Motor neuron (in vitro differentiated cells): ENCODE measurements at regions of chr10 and their contacts with region 1.

Region 1: DNA sequence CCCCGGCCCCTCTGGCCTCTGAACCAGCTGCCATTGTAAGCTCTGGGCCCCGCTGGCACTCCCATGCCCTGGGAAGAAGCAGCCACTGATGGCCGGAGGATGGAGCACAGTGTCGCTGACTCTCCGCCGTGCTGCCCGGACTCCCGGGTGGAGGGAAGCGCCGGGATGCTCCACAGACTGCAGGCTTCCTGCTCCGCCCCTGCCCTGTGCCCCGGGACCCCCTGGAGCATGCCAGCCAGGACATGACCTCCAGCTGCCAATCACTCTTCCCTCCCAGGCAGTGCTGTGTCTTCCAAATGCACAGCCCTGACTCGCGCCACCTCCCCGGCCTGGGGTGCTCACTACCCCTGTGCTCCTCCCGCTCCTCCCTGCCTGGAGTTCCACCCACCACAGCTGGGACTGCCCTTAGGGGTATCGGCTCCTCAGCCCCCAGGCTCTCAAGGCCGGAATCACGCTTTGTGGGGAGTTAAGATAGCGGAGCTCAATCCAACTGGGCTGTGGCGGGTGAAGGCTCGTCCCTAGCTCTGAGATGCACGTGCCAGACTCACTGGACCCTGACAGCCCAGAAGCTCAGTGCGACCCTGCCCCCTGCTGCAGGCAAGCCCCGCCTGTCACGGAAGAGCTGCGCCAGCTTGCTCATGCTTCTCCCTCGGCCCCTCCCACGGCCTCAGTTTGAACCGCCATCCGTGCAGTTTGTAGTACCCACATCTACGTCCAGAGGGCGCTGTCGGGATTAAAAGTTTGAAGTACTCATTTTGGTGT is 142.3 kb upstream of the TCERG1L start:
- ATAC-seq: peak in 6 of 8 experiments; percentile 43 to 81 (median 74)
- H3K4me3 ChIP-seq: peak overlapping the region in 2 of 5 donors; percentile 1 to 7
- H3K27ac ChIP-seq: peak overlapping the region in 1 of 2 donors; percentile 69
- H3K4me1 ChIP-seq: peaks cover 0 to 15% of the 10 kb centered on the region in 2 donors

Region 2: DNA sequence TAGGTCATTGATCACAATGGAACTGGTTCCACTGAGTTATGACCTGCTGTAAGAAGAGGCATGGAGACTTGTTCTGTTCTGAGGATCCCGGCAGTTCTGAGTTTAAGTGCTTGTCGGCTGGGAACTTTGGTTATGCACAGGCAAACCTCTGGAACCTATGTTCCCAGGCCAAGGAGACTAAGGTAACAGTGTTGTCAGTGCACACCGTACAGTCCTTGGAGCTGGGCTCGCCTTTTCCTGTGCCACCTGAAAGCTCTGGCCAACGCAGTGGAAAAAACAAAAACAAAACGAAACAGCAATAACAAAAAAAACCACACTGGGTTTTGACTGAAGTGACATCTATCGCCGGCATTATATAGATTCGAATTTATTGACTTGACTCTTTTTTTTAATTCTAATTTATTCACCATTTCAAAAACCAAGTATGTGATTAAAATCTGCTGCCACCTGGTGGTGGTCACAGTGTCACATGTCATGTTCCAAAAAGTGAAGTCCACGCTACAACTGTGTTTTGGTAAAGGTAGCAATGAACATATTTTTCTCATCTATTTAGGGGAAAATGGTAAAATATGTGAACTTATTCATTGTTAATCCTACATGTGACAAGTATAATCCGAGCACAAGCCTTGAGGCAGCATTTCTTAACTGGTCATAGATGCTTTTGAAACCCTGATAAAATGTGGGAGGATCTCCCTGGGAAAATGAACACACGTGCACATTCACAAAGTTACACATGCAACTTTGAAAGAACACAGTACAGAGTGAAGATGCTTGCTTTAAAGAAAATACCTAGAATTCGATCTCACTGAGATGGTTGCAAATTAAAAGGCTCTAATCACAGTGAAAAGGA is 333.2 kb after region 1 on chr10:
- in situ Hi-C with region 1: loop called in 1 of 9 experiments (anchors 25 kb)
- ATAC-seq: peak in 2 of 8 experiments; percentile 20 to 39
- H3K4me3 ChIP-seq: no peak overlapping the region
- H3K27ac ChIP-seq: no peak overlapping the region
- H3K4me1 ChIP-seq: peaks cover 0 to 3% of the 10 kb centered on the region in 2 donors